Aorta (tissue), 5 donors: ENCODE measurements at regions of chr19 and their contacts with region 1.

Region 1: DNA sequence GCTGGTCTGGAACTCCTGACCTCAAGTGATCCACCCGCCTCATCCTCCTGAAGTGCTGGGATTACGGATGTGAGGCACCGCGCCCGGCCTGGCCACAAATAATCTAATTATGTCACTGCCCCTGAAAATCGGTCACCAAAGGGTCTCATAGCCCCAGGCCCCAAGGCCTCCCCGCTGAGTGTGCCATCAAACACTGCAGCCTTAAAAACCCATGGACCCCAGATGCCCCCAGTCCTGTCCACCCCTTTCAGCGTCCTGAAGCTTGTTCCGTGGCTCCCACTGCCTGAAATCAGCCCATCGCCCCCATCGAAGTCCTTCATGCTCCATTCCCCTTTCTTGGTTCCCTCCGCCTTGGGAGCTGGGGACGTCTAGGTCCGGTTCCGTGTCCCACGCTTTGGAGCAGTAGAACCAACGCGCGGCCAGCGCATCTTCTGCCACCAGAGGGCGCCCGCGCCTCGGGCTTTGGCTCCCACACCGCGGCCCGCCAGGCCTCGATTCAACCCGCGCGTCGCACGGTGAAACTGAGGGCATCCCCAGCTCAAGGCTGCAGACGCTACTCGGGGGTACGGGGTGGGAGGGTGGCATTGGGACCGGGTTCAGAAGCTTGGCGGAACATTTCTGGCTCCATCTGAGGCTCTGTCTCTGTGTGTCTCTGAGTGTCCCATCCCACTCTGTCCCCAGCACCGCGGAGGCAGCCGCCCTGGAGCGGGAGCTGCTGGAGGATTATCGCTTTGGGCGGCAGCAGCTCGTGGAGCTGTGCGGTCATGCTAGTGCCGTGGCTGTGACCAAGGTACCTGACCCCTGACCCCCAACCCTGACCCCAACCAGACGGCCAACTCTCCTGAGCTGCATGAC is 3.5 kb downstream of the YJEFN3 start:
- DNase-seq: peak; percentile 88 to 97
- ATAC-seq: peak; percentile 85
- H3K4me3 ChIP-seq: no peak overlapping the region
- H3K27ac ChIP-seq: no peak overlapping the region
- H3K4me1 ChIP-seq: no peaks in the 10 kb centered on the region
- H3K27me3 ChIP-seq: no peaks in the 10 kb centered on the region

Region 2: GRCh38 chr19:19643158-19644053 is 111.2 kb after region 1 on chr19 and contains the start of gene GMIP:
- intact Hi-C with region 1: loop called (anchors 1 to 5 kb)
- DNase-seq: peak; percentile 87 to 94
- ATAC-seq: peak; percentile 85
- H3K4me3 ChIP-seq: peak within 1 kb of the TSS; percentile 29 to 60
- H3K27ac ChIP-seq: no peak within 1 kb of the TSS
- H3K4me1 ChIP-seq: no peaks in the 10 kb centered on the region
- H3K27me3 ChIP-seq: no peaks in the 10 kb centered on the region
- total RNA-seq, gene GMIP: 14.9 to 25.6 TPM

Region 3: GRCh38 chr19:19956434-19957075 is 424.4 kb after region 1 on chr19:
- intact Hi-C with region 1: loop called (anchors 2 to 5 kb)
- DNase-seq: no peak
- ATAC-seq: no peak
- H3K4me3 ChIP-seq: no peak overlapping the region
- H3K27ac ChIP-seq: no peak overlapping the region
- H3K4me1 ChIP-seq: no peaks in the 10 kb centered on the region
- H3K27me3 ChIP-seq: no peaks in the 10 kb centered on the region

Region 4: DNA sequence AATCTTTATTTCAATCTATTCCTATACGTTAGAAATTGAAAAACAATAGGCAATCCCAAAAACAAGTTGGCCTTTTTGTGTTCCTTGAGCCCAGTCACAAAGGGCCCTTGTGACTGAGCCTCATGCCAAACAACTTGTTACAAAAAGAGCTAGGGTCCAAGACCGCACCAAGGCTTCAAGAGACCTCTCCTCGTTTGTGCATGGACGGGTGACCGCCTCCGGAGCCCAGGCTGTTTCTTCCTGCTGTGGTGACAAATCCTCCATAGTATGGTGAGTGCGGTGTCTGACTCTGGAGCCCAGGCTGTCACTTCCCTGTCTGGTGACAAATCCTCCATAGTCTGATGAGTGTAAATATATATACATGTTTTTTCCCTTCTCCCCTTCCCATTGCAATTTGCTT is 432.2 kb after region 1 on chr19:
- intact Hi-C with region 1: loop called (anchors 2 to 5 kb)
- DNase-seq: no peak
- ATAC-seq: no peak
- H3K4me3 ChIP-seq: no peak overlapping the region
- H3K27ac ChIP-seq: no peak overlapping the region
- H3K4me1 ChIP-seq: no peaks in the 10 kb centered on the region
- H3K27me3 ChIP-seq: no peaks in the 10 kb centered on the region